HEK293 (cell line): ENCODE measurements at regions of chr1 and their contacts with region 1.

Region 1: GRCh38 chr1:145845514-145846161 is at the start of gene NUDT17:
- H3K4me3 ChIP-seq: peak within 1 kb of the TSS; percentile 60
- H3K27ac ChIP-seq: peak within 1 kb of the TSS; percentile 40; the same call in 1 of the 2 replicates
- H3K4me1 ChIP-seq: 0 out of 2 replicates have a peak, but pooled peaks cover 3% of the 10 kb centered on the region
- CTCF ChIP-seq: peak; percentile 96

Region 2: DNA sequence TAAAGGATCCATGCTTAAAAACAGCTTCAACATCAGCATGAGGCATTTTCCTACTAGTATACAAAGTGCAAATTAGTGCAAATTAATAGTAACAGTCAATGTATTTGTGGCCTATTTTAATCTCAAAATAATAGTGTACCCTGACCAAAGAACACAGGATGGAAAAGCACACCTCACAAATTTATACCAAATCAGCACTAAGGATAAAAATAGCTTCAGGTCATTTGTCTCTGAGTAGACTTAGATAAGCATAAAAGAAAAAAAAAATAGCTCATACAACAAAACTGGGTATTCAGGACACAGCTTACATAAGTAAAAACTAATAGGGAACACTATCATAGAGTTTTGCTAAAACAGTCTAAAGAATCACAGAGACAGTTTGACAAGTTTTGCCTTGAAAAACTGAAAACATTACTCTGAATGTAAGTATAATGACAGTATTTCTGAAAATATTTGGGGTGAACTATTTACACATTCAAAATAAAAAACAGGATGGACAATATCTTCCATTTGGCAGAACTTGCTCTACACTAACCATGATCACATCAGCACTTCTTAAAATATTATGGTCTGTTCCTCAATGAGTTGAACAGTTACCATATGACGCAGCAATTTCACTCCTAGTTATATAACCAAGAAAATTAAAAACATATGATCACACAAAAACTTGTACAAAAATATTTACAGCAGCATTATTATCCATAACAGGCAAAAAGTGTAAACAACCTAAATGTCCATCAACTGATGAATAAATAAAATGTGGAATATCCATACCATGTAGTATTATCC is 68.1 kb before region 1 on chr1:
- CTCF ChIA-PET with region 1: no interaction called
- POLR2A ChIA-PET with region 1: no interaction called
- H3K4me3 ChIP-seq: no peak overlapping the region
- H3K27ac ChIP-seq: no peak overlapping the region
- H3K4me1 ChIP-seq: 0 out of 2 replicates have a peak, but pooled peaks cover 1% of the 10 kb centered on the region
- CTCF ChIP-seq: no peak

Region 3: GRCh38 chr1:145858894-145859490 is 13.4 kb after region 1 on chr1 and contains the start of gene PIAS3:
- CTCF ChIA-PET with region 1: interaction called, 190 read pairs
- POLR2A ChIA-PET with region 1: interaction called, 127 read pairs
- H3K4me3 ChIP-seq: peak within 1 kb of the TSS; percentile 68
- H3K27ac ChIP-seq: peak within 1 kb of the TSS; percentile 65; the same call in 1 of the 2 replicates
- H3K4me1 ChIP-seq: no peaks in the 10 kb centered on the region
- CTCF ChIP-seq: no peak

Region 4: DNA sequence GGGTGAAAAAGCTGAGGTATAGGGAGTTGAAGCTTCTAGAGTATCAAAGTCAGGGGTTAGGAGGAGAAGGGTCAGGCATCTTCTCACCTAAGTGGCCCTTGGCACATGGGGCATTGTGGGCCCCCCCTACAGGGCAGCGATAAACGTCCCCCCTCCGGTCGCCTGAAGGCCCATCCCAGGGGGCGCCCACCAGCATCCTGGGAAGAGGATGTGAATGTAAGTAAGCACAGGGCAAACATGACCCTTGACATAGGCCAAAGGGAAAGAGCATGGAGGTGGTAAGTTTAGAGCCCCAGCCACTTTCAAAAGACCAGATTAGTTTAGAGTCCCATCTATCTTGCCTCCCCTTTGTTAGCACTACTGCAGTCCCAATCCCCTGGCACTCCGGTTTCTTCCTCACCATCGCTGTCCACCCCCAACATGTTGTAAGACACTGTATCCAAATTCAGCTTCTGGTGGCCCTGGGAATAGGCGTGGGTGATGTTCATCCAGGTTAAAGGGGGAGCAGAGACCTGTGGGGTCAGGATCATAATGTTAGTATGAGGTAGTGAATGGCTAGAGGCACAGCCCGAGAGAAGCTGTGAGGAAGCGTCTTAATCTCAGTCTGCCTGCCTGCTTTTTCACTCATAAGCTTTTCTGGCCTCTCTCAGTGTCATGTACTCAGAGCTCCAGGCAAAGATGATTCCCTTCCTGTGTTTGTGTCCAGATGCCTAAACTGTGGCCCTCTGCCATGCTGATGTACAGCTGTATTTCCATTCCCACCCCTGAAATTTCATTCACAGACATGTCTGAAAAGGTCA is 61.5 kb after region 1 on chr1:
- CTCF ChIA-PET with region 1: interaction called, 47 read pairs
- POLR2A ChIA-PET with region 1: no interaction called
- H3K4me3 ChIP-seq: no peak overlapping the region
- H3K27ac ChIP-seq: no peak overlapping the region
- H3K4me1 ChIP-seq: no peaks in the 10 kb centered on the region
- CTCF ChIP-seq: no peak

Region 5: DNA sequence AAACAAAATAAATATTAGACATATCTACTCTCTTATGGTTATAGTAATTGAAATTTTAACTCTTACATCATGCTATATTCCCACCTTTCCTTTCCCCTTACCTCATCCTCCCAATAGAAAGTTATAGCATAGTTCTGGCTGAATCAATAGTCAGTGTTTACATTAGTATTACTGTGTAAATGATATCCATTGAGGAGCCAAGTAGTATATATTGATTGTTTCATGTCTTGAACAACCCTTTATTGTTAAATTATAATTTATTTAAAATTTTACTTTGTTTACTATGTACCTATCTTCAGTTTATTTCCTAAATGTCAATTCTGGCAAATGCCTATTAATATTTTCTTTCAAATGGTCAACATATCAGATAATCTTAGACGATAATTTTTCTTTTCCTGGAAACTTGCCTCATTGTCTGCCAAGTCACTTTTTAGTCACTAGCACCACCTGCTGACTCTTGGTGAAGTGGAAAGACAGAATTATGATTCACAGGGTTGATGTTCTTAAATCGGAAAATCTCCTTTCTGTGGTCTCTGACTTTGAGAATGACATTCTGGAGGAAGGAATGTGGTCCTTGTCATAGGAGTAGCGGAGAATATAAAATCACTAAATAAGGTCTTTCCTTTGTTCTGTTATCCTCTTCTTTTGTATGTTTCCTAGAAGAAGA is 167.2 kb after region 1 on chr1:
- CTCF ChIA-PET with region 1: interaction called, 57 read pairs
- POLR2A ChIA-PET with region 1: no interaction called
- H3K4me3 ChIP-seq: no peak overlapping the region
- H3K27ac ChIP-seq: no peak overlapping the region
- H3K4me1 ChIP-seq: no peaks in the 10 kb centered on the region
- CTCF ChIP-seq: peak; percentile 73